ENCODE measurements at regions of chr2 and their contacts with region 1.

Region 1: GRCh38 chr2:95314964-95315611 is 17.9 kb downstream of the KCNIP3 start:
- DNase-seq: peak; percentile 36
- ATAC-seq: peak; percentile 86
- H3K4me3 ChIP-seq: no peak overlapping the region
- H3K27ac ChIP-seq: no peak overlapping the region
- H3K4me1 ChIP-seq: no peaks in the 10 kb centered on the region
- H3K27me3 ChIP-seq: peaks cover 14 to 88% of the 10 kb centered on the region in 2 experiments
- CTCF ChIP-seq: peak; percentile 89
- EP300 ChIP-seq: no peak
- POLR2A ChIP-seq: no peak
- RAD21 ChIP-seq: peak; percentile 90

Region 2: DNA sequence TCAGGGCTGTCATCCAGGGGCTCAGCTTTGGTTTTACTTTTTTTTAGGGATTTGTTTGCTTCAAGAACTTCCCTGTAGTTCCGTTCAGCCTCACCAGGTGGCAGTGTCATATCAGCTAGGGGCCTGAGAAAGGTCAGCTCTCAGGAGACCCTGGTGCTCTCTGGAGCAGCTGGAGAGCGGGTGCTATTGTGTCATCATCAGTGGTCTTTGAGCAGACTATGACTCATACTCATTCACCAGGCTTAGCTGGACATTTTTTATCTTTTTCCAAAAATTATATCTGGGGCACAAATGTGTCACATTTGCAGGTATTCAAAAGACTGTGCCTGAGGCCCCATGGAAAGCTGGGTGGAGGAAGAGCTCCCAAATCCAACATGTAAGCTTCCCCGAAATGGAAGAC is 83.4 kb before region 1 on chr2:
- CTCF ChIA-PET with region 1: interaction called, 50 read pairs
- POLR2A ChIA-PET with region 1: no interaction called
- in situ Hi-C with region 1: loop called (anchors 5 kb)
- intact Hi-C with region 1: no loop called
- DNase-seq: peak; percentile 85
- ATAC-seq: peak; percentile 98
- H3K4me3 ChIP-seq: no peak overlapping the region
- H3K27ac ChIP-seq: no peak overlapping the region
- H3K4me1 ChIP-seq: peaks cover 4% of the 10 kb centered on the region; the same call in 1 of the 2 replicates
- H3K27me3 ChIP-seq: no peaks in the 10 kb centered on the region; a peak in 1 of 5 replicates
- CTCF ChIP-seq: peak; percentile 92
- EP300 ChIP-seq: peak in 1 of 2 experiments; percentile 22; a peak in 1 of 4 replicates
- POLR2A ChIP-seq: no peak
- RAD21 ChIP-seq: peak; percentile 87

Region 3: DNA sequence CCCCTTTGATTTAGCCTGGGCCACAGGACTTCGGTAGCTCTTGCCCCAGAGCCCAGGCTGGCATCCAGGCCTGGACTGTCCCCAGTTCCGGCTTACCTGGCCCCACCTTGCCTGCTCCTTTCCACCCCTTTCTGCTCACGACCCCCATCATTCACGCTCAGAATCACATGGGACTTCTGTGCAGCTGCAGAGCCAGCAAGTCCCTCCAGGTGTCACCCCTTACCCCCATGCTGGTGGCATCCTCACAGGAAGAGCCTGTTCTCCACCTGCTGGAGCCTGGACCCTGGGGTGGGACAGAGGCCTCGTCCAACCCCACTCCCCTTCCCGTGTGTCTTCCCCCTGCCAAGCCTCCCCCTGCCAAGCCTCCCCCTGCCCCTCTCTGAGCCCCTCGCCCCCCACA is 25.8 kb before region 1 on chr2:
- CTCF ChIA-PET with region 1: no interaction called
- POLR2A ChIA-PET with region 1: no interaction called
- in situ Hi-C with region 1: no loop called
- intact Hi-C with region 1: loop called (anchors 1 kb)
- DNase-seq: peak; percentile 16
- ATAC-seq: peak; percentile 81
- H3K4me3 ChIP-seq: no peak overlapping the region
- H3K27ac ChIP-seq: no peak overlapping the region
- H3K4me1 ChIP-seq: no peaks in the 10 kb centered on the region
- H3K27me3 ChIP-seq: peaks cover 0 to 20% of the 10 kb centered on the region in 2 experiments; a peak in 4 of 5 replicates
- CTCF ChIP-seq: peak; percentile 63
- EP300 ChIP-seq: no peak
- POLR2A ChIP-seq: no peak
- RAD21 ChIP-seq: peak; percentile 57

Region 4: GRCh38 chr2:96389736-96390135 is 1074.6 kb after region 1 on chr2:
- CTCF ChIA-PET with region 1: no interaction called
- POLR2A ChIA-PET with region 1: no interaction called
- in situ Hi-C with region 1: no loop called
- intact Hi-C with region 1: no loop called
- DNase-seq: no peak
- ATAC-seq: no peak
- H3K4me3 ChIP-seq: no peak overlapping the region
- H3K27ac ChIP-seq: no peak overlapping the region
- H3K4me1 ChIP-seq: peaks cover 10% of the 10 kb centered on the region; the same call in 1 of the 2 replicates
- H3K27me3 ChIP-seq: peaks cover 0 to 17% of the 10 kb centered on the region in 2 experiments; a peak in 2 of 5 replicates
- CTCF ChIP-seq: no peak
- EP300 ChIP-seq: no peak
- POLR2A ChIP-seq: no peak
- RAD21 ChIP-seq: no peak

Measured in HepG2 (cell line).